ENCODE measurements at regions of chr17 and their contacts with region 1.

Region 1: GRCh38 chr17:78745407-78746088 is 36.5 kb downstream of the CYTH1 start:
- DNase-seq: peak in 1 of 10 donors; percentile 46
- H3K4me3 ChIP-seq: peak overlapping the region in 1 of 59 donors; percentile 8
- H3K27ac ChIP-seq: peak overlapping the region in 24 of 59 donors; percentile 2 to 61 (median 24)
- H3K27me3 ChIP-seq: no peaks in the 10 kb centered on the region
- CTCF ChIP-seq: peak; percentile 61 to 86 (median 76)

Region 2: DNA sequence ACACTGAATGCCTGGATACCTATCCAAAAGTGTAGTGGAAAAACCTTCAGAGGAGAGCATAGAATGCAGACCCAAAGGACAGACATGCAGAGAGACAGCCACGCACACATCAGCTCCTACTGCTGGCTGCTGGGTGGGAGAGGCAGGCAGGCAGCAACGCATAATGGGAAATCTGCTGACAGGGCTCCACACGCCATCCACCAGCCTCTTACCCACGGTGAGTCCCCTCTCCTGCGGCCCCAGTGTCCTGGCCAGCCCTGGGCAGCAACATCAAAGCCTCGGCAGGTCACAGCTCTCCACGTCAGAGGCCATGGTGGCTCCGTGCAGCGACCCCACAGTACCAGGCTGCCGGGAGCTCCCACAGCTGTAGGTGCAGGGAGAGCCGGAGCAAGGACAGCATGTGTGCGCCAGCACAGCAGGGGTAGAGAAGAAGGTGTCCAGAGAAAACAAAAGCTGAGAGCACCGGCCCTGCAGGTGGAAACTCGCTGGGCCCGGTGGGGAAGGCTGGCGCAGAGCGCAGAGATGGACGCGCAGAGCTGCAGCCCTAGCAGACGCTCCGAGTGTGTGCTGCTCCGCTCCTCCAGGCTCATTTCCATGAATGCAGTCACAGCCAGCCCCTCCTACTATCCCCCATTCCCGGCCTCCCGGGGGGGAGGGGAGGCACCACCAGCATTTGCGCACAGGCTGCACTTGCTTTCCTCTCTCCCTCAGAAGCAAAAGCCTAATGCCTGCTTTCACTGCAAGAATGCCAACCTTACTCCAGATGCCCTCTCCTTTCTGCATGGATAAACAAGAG is 22.3 kb before region 1 on chr17:
- intact Hi-C with region 1: loop called in 1 of 2 experiments (anchors 1 kb)
- DNase-seq: peak; percentile 86 to 96 (median 95)
- H3K4me3 ChIP-seq: peak overlapping the region; percentile 59 to 93 (median 78)
- H3K27ac ChIP-seq: peak overlapping the region; percentile 86 to 99 (median 97)
- H3K27me3 ChIP-seq: no peaks in the 10 kb centered on the region
- CTCF ChIP-seq: peak in 14 of 56 donors; percentile 6 to 46 (median 16)

Measured in dorsolateral prefrontal cortex (tissue), 120 donors.